ENCODE measurements at regions of chr7 and their contacts with region 1.

Region 1: GRCh38 chr7:74479961-74480829 is 26.5 kb downstream of the GTF2IRD1 start:
- DNase-seq: peak; percentile 83 to 94 (median 88)
- ATAC-seq: peak; percentile 46 to 74 (median 68)
- H3K4me3 ChIP-seq: peak overlapping the region; percentile 4 to 63 (median 54)
- H3K27ac ChIP-seq: peak overlapping the region; percentile 83 to 99 (median 94)
- H3K4me1 ChIP-seq: peaks cover 0 to 76% (median 53%) of the 10 kb centered on the region in 12 donors
- H3K27me3 ChIP-seq: no peaks in the 10 kb centered on the region
- CTCF ChIP-seq: no peak
- POLR2A ChIP-seq: peak; percentile 14 to 74

Region 2: DNA sequence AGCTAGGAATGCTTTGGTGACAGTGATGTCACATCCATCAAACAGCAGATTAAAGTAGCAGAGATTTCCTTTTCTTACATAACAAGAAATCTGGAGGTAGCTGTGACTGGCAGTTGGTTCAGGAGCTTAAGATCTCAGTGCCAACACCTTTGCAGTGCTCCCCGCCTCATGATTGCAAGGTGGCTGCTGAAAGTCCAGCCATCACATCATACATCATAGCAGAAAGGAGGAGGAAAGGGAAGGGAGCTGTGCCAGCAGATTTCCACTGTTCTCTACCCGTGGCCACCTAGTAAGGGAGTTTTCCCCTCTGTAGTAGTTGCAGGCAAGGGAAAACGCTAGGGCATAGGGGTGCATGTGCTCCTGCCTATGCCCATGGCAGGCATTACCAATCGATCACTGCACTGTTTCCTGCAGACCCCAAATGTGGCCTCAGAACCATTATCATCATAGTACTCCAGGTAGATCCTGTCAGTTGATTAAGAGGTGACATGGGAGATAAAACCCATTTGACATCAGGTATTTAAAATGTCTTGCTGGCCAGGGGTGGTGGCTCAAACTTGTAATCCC is 84.4 kb before region 1 on chr7:
- intact Hi-C with region 1: no loop called
- DNase-seq: peak in 1 of 5 donors; percentile 5
- ATAC-seq: no peak
- H3K4me3 ChIP-seq: no peak overlapping the region
- H3K27ac ChIP-seq: no peak overlapping the region
- H3K4me1 ChIP-seq: peaks cover 0 to 12% (median 5%) of the 10 kb centered on the region in 12 donors
- H3K27me3 ChIP-seq: no peaks in the 10 kb centered on the region
- CTCF ChIP-seq: no peak
- POLR2A ChIP-seq: no peak

Region 3: DNA sequence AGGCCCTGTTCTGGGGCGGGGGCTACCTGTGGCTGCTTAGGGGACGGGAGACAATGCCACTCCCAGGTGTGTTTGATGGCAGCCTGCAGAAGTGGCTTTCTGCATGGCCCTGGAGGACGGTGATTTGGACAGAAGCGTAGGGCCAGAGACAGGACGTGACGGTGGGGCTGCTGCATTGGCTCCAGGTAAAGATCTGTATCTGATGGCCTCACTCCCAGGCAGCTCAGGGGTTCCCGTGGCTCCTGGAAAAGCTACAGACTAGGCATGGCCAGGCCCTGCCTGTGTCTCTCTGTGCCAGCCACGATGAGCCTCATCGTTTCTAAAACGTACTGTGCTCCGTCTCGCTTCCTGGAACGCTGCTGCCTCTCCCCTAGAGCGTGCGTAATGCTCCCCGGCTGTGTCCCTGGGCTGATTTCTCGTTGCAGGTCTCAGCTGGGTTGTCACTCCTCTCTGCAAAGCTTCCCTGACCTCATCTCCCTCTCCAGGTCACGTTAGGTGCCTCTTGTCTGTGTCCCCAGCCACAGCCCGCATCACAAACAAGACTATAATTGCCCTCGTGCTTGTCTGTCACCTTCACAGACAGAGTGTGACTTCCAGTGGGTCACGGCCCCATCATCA is 13.9 kb before region 1 on chr7:
- intact Hi-C with region 1: loop called in 1 of 10 experiments (anchors 1 kb)
- DNase-seq: peak in 2 of 5 donors; percentile 70 to 88
- ATAC-seq: peak; percentile 87 to 90 (median 89)
- H3K4me3 ChIP-seq: no peak overlapping the region
- H3K27ac ChIP-seq: peak overlapping the region; percentile 37 to 95 (median 84)
- H3K4me1 ChIP-seq: peaks cover 0 to 31% (median 5%) of the 10 kb centered on the region in 12 donors
- H3K27me3 ChIP-seq: no peaks in the 10 kb centered on the region
- CTCF ChIP-seq: no peak
- POLR2A ChIP-seq: peak in 1 of 2 donors; percentile 35

Region 4: DNA sequence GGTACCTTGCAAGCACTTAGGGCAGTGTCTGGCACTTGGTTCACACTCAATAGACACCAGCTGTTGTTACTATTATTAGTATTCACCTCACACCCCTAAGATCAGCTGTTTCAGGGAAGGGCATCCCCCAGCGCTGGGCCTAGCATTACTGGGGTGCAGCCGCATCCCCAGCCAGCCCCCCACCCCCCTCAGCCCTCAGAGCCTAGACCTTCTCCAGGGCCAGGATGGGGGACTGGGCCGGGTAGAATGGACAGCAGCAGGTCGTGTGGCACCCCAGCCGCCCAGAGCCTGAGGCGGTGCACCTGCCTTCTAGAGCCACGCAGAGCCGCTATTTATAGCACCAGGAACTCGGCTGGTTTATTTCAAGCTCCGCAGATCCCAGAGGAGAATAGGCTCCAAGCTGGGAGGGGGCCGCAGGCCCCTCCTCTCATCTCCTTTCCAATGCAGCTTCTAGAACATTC is 34.0 kb after region 1 on chr7:
- intact Hi-C with region 1: loop called in 1 of 10 experiments (anchors 5 kb)
- DNase-seq: peak in 4 of 5 donors; percentile 32 to 66 (median 60)
- ATAC-seq: peak; percentile 70 to 88 (median 82)
- H3K4me3 ChIP-seq: no peak overlapping the region
- H3K27ac ChIP-seq: peak overlapping the region in 10 of 12 donors; percentile 62 to 87 (median 70)
- H3K4me1 ChIP-seq: peaks cover 0 to 27% (median 4%) of the 10 kb centered on the region in 12 donors
- H3K27me3 ChIP-seq: no peaks in the 10 kb centered on the region
- CTCF ChIP-seq: no peak
- POLR2A ChIP-seq: no peak

Region 5: GRCh38 chr7:74535951-74536356 is 55.8 kb after region 1 on chr7:
- intact Hi-C with region 1: loop called in 1 of 10 experiments (anchors 5 kb)
- DNase-seq: peak in 2 of 5 donors; percentile 39 to 48
- ATAC-seq: peak; percentile 10 to 38 (median 28)
- H3K4me3 ChIP-seq: no peak overlapping the region
- H3K27ac ChIP-seq: peak overlapping the region in 11 of 12 donors; percentile 38 to 90 (median 68)
- H3K4me1 ChIP-seq: peaks cover 0 to 19% (median 6%) of the 10 kb centered on the region in 12 donors
- H3K27me3 ChIP-seq: no peaks in the 10 kb centered on the region
- CTCF ChIP-seq: no peak
- POLR2A ChIP-seq: no peak

Measured in heart left ventricle (tissue), 16 donors.